ENCODE measurements at regions of chr10 and their contacts with region 1.

Region 1: GRCh38 chr10:115092555-115093285 is 445 bp upstream of the ATRNL1 start:
- DNase-seq: no peak
- H3K4me3 ChIP-seq: peak overlapping the region; percentile 55 to 87 (median 78)
- H3K27ac ChIP-seq: peak overlapping the region; percentile 44 to 81 (median 78)
- H3K4me1 ChIP-seq: peaks cover 6 to 29% (median 24%) of the 10 kb centered on the region in 4 donors
- H3K27me3 ChIP-seq: peaks cover 0 to 14% (median 3%) of the 10 kb centered on the region in 4 donors
- CTCF ChIP-seq: no peak
- EP300 ChIP-seq: no peak
- POLR2A ChIP-seq: no peak

Region 2: GRCh38 chr10:114876602-114877300 is 216.0 kb before region 1 on chr10:
- intact Hi-C with region 1: loop called (anchors 10 kb)
- DNase-seq: no peak
- H3K4me3 ChIP-seq: no peak overlapping the region
- H3K27ac ChIP-seq: no peak overlapping the region
- H3K4me1 ChIP-seq: peaks cover 0 to 22% (median 8%) of the 10 kb centered on the region in 4 donors
- H3K27me3 ChIP-seq: peaks cover 0 to 12% (median 0%) of the 10 kb centered on the region in 4 donors
- CTCF ChIP-seq: peak; percentile 61 to 73 (median 61)
- EP300 ChIP-seq: no peak
- POLR2A ChIP-seq: no peak

Region 3: GRCh38 chr10:114940735-114941134 is 152.0 kb before region 1 on chr10:
- intact Hi-C with region 1: loop called (anchors 10 kb)
- DNase-seq: no peak
- H3K4me3 ChIP-seq: no peak overlapping the region
- H3K27ac ChIP-seq: no peak overlapping the region
- H3K4me1 ChIP-seq: peaks cover 9 to 30% (median 26%) of the 10 kb centered on the region in 4 donors
- H3K27me3 ChIP-seq: no peaks in the 10 kb centered on the region
- CTCF ChIP-seq: no peak
- EP300 ChIP-seq: no peak
- POLR2A ChIP-seq: no peak

Region 4: GRCh38 chr10:114974625-114975024 is 118.1 kb before region 1 on chr10:
- intact Hi-C with region 1: no loop called
- DNase-seq: no peak
- H3K4me3 ChIP-seq: no peak overlapping the region
- H3K27ac ChIP-seq: no peak overlapping the region
- H3K4me1 ChIP-seq: peaks cover 0 to 14% (median 0%) of the 10 kb centered on the region in 4 donors
- H3K27me3 ChIP-seq: no peaks in the 10 kb centered on the region
- CTCF ChIP-seq: no peak
- EP300 ChIP-seq: no peak
- POLR2A ChIP-seq: no peak

Measured in esophagus muscularis mucosa (tissue), 4 donors.